RWPE1 (cell line): ENCODE measurements at regions of chr3 and their contacts with region 1.

Region 1: GRCh38 chr3:192816351-192816750 is 89.0 kb upstream of the FGF12 start:
- DNase-seq: peak; percentile 45
- H3K27ac ChIP-seq: no peak overlapping the region
- CTCF ChIP-seq: peak; percentile 62; the same call in 1 of the 2 replicates

Region 2: DNA sequence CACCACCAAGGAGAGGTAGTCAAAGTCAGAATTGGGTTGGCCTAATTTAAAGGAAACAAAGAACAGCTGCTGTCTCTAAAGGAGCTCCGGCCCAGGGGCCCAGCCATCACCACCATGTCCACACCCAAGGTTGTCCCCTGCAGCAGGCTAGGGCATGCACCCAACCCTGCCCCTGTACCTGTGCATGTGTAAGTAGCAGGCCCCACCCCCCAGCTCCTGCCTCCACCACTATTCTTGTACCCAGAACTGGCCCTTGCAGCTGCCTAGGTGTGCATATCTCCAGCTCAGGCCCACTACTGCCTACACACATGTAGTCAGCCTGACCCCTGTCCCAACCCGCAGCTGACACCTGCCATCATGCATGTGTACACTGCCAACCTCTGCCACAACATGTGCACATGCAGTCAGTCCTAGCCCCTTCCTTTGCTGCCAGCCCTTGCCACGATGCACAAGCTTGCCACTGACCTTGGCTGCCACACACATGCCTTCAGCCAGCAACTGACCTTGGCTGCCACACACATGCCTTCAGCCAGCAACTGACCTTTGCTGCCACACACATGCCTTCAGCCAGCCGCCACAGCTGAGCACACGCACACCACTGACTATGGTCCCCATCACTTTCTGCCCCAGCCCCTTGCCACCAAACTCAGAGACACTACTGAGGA is 128.7 kb before region 1 on chr3:
- CTCF ChIA-PET with region 1: no interaction called
- POLR2A ChIA-PET with region 1: no interaction called
- DNase-seq: no peak
- H3K27ac ChIP-seq: no peak overlapping the region
- CTCF ChIP-seq: no peak

Region 3: GRCh38 chr3:192850451-192850981 is 34.2 kb after region 1 on chr3:
- CTCF ChIA-PET with region 1: interaction called, 10 read pairs
- POLR2A ChIA-PET with region 1: no interaction called
- DNase-seq: peak; percentile 88
- H3K27ac ChIP-seq: peak overlapping the region; percentile 87
- CTCF ChIP-seq: no peak

Region 4: GRCh38 chr3:192917404-192918274 is 101.3 kb after region 1 on chr3 and contains the start of gene MB21D2:
- CTCF ChIA-PET with region 1: interaction called, 13 read pairs
- POLR2A ChIA-PET with region 1: no interaction called
- DNase-seq: peak; percentile 77
- H3K27ac ChIP-seq: peak within 1 kb of the TSS; percentile 90
- CTCF ChIP-seq: no peak

Region 5: DNA sequence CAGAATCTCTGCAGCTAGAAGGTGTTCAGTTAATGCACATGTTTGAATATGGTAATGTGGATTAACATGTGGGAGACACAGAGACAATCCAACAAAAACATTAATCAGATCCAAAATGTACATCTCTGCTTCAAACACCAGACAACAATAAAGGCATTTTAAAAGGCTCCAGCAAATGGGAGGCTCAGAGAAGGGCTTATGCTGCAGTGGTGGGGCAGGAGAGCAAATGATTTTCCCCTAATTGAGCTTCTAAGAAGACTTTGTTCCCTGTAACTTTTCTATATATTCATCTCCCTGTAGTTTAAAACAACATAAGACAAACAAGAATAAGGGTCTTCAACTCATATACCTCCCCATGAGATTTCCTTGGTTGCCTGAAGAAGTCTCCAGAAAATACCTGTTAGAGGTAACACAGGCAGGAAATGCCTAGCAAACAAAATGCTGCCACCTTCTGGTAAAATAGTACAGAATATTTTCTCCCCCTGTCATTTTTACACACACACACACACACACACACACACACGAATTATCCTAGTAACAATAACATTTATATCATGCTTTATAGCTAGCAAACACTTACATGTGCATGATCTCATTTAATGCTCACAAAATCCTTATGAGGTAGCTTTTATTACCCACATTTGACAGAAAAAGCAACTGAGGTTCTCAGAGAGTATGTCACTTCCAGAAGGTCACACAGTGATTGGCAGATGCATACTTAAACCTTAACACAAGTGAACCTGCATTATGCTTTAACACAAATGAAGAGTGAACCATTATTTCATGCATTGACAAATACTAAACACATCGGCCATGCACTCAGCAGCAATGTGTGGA is 224.7 kb after region 1 on chr3:
- CTCF ChIA-PET with region 1: interaction called, 50 read pairs
- POLR2A ChIA-PET with region 1: no interaction called
- DNase-seq: peak; percentile 50
- H3K27ac ChIP-seq: no peak overlapping the region
- CTCF ChIP-seq: peak; percentile 68

Region 6: DNA sequence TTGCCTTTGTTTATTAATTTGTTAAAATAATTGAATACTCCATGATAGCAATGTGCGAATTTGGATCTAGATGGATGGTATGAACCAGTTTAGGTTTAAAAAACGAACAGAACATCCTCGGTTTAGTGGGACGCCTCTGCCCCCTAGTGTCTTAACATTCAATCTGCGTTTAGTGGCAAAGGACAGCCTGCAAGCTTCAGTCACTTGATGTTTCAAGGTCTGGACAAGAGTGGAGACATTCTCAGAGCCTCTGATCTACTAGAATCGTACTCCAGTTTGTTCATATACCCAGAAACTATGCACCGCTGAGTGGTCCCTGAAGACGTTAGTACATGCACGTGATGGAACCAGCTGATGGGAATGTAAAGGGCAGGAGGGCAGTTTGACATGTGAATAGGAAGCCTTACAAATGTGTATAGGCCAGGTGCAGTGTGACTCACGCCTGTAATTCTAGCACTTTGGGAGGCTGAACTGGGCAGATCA is 756.1 kb after region 1 on chr3:
- CTCF ChIA-PET with region 1: interaction called, 13 read pairs
- POLR2A ChIA-PET with region 1: no interaction called
- DNase-seq: peak; percentile 55
- H3K27ac ChIP-seq: no peak overlapping the region
- CTCF ChIP-seq: peak; percentile 79